ENCODE measurements at regions of chr13 and their contacts with region 1.

Region 1: GRCh38 chr13:60150538-60150937 is 13.2 kb downstream of the DIAPH3 start:
- DNase-seq: no peak
- CTCF ChIP-seq: no peak

Region 2: DNA sequence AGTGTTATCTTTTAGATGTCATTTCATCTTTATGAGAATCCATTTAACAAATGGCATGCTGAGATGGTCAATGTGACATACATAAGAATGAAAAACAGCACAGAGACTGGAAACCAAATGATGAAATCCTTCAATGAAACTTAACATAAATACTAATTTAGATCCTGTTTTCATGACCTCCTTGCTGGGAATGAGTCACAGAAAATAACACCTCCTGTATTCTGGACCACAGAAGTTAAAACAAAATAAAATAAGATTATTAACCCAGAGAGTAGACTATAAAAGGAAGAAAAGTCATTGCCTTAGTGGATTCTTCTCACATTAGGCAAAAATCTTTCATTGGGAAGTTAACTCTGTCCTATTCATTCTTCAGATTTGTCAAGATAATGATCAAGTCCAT is 11.6 kb after region 1 on chr13:
- CTCF ChIA-PET with region 1: interaction called, 11 read pairs
- POLR2A ChIA-PET with region 1: no interaction called
- DNase-seq: no peak
- CTCF ChIP-seq: no peak

Region 3: DNA sequence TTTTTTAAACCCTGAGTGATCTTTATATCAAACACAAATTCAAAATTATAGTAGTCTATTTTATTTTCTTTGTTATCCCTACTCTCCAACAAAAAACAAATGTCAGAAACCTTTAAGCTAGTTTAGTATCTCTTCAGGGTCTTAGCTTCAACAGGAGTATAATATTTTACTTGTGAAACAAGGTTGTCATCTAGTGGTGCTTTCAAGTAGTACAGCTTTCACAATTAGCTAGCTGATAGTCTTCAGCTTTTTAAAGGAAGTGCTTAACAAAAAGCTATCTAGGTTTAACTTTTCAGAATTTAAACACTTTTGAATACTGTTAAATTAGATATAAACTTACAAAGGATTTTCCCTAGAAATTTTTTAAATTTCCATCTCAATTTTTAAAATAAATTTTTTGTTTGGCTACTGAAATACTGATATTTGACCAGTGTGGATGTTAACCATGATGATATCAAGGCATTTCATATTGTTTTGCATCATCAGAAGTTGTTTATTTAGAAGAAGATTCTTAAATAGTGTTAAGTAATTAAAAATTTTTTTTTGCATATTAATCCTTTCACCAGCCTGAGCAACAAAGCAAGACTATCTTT is 280.7 kb after region 1 on chr13:
- CTCF ChIA-PET with region 1: no interaction called
- POLR2A ChIA-PET with region 1: no interaction called
- DNase-seq: peak; percentile 25
- CTCF ChIP-seq: peak; percentile 78

Measured in GM10248 (cell line).